ENCODE measurements at regions of chr1 and their contacts with region 1.

Region 1: GRCh38 chr1:6205849-6206519 is at the start of gene RNF207:
- DNase-seq: peak; percentile 84
- H3K4me3 ChIP-seq: peak within 1 kb of the TSS; percentile 37 to 70 (median 61)
- H3K27ac ChIP-seq: no peak within 1 kb of the TSS
- H3K4me1 ChIP-seq: peaks cover 20% of the 10 kb centered on the region
- H3K27me3 ChIP-seq: no peaks in the 10 kb centered on the region
- CTCF ChIP-seq: no peak
- total RNA-seq, gene RNF207: 25.7 to 26.5 TPM

Region 2: DNA sequence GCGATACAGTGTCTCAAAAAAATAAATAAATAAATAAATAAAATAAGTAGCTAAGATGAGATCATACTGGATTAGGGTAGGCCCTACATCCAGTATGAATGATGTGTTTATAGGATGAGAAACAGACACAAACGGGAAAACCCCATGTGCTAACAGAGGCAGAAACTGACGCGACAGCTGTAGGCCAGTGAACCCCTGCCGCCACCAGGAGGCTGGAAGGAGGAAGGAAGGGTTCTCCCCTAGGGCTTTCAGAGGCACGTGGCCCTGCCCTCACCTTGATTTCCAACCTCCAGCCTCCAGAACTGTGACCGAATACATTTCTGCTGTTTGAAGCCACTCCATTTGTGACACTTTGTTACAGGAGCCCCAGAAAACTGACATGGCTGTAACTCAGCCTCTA is 64.4 kb before region 1 on chr1:
- CTCF ChIA-PET with region 1: no interaction called
- dilution Hi-C with region 1: no loop called
- in situ Hi-C with region 1: no loop called
- intact Hi-C with region 1: no loop called
- DNase-seq: peak; percentile 30
- H3K4me3 ChIP-seq: no peak overlapping the region
- H3K27ac ChIP-seq: no peak overlapping the region
- H3K4me1 ChIP-seq: no peaks in the 10 kb centered on the region
- H3K27me3 ChIP-seq: no peaks in the 10 kb centered on the region
- CTCF ChIP-seq: no peak

Region 3: GRCh38 chr1:6235296-6235677 is 29.3 kb after region 1 on chr1:
- CTCF ChIA-PET with region 1: interaction called, 3 read pairs
- dilution Hi-C with region 1: no loop called
- in situ Hi-C with region 1: no loop called
- intact Hi-C with region 1: loop called (anchors 1 kb)
- DNase-seq: no peak
- H3K4me3 ChIP-seq: peak overlapping the region; percentile 68 to 83 (median 70)
- H3K27ac ChIP-seq: peak overlapping the region; percentile 30
- H3K4me1 ChIP-seq: peaks cover 7% of the 10 kb centered on the region
- H3K27me3 ChIP-seq: no peaks in the 10 kb centered on the region
- CTCF ChIP-seq: no peak

Region 4: GRCh38 chr1:6267686-6268322 is 61.8 kb after region 1 on chr1:
- CTCF ChIA-PET with region 1: interaction called, 11 read pairs
- dilution Hi-C with region 1: no loop called
- in situ Hi-C with region 1: no loop called
- intact Hi-C with region 1: no loop called
- DNase-seq: peak; percentile 78
- H3K4me3 ChIP-seq: no peak overlapping the region
- H3K27ac ChIP-seq: no peak overlapping the region
- H3K4me1 ChIP-seq: peaks cover 30% of the 10 kb centered on the region
- H3K27me3 ChIP-seq: no peaks in the 10 kb centered on the region
- CTCF ChIP-seq: no peak

Region 5: GRCh38 chr1:7186382-7187109 is 980.6 kb after region 1 on chr1:
- CTCF ChIA-PET with region 1: no interaction called
- dilution Hi-C with region 1: no loop called
- in situ Hi-C with region 1: no loop called
- intact Hi-C with region 1: no loop called
- DNase-seq: no peak
- H3K4me3 ChIP-seq: no peak overlapping the region
- H3K27ac ChIP-seq: no peak overlapping the region
- H3K4me1 ChIP-seq: no peaks in the 10 kb centered on the region
- H3K27me3 ChIP-seq: no peaks in the 10 kb centered on the region
- CTCF ChIP-seq: no peak

Measured in mammary epithelial cell (primary cell).